ENCODE measurements at regions of chrX and their contacts with region 1.

Region 1: GRCh38 chrX:30735839-30736238 is 82.6 kb downstream of the GK start:
- DNase-seq: peak; percentile 34 to 73 (median 59)
- ATAC-seq: peak; percentile 78
- H3K4me3 ChIP-seq: no peak overlapping the region
- H3K4me3 Mint-ChIP-seq: peak overlapping the region in 4 of 10 donors; percentile 22 to 69 (median 37)
- H3K27ac ChIP-seq: no peak overlapping the region
- H3K27ac Mint-ChIP-seq: no peak overlapping the region
- H3K4me1 ChIP-seq: no peaks in the 10 kb centered on the region
- H3K4me1 Mint-ChIP-seq: peaks cover 0 to 5% (median 0%) of the 10 kb centered on the region in 7 donors
- H3K27me3 ChIP-seq: no peaks in the 10 kb centered on the region
- H3K27me3 Mint-ChIP-seq: no peaks in the 10 kb centered on the region

Region 2: DNA sequence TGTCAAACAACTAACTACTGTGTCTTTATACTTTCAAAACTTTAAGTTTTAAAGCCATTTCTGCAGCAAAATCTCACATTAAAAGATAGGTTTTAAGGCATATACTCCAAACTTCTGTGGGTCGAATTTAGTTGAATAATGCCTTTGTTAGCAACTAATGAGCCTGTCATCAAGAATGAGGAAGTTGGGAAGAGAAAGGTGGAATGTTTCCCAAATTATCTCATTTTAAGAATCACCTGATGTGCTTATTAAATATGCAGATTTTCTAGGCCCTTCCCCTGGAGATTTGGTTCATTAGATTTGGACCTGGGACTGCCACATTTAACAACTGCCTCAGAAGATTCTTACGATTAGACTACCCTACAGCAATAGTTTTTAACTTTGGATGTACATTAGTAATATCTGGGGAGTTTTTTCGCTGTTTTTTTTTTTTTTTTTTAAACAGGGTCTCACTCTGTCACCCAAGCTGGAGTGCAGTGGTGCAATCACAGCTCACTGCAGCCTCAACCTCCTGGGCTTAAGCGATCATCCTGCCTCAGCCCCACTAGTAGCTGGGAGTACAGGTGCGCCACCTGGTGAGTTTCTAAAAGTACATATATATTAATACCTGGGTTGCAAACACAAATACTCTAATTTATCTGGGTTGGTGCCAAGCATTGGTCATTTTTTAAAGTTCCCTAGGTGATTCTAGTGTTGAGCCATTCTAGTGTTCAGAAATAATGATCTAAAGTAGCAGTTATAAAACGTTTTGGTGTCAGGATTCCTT is 142.2 kb before region 1 on chrX:
- CTCF ChIA-PET with region 1: no interaction called
- POLR2A ChIA-PET with region 1: no interaction called
- intact Hi-C with region 1: no loop called
- DNase-seq: peak in 4 of 9 donors; percentile 24 to 39 (median 25)
- ATAC-seq: no peak
- H3K4me3 ChIP-seq: no peak overlapping the region
- H3K4me3 Mint-ChIP-seq: peak overlapping the region in 1 of 10 donors; percentile 1
- H3K27ac ChIP-seq: no peak overlapping the region
- H3K27ac Mint-ChIP-seq: no peak overlapping the region
- H3K4me1 ChIP-seq: no peaks in the 10 kb centered on the region
- H3K4me1 Mint-ChIP-seq: peaks cover 0 to 22% (median 4%) of the 10 kb centered on the region in 7 donors
- H3K27me3 ChIP-seq: no peaks in the 10 kb centered on the region
- H3K27me3 Mint-ChIP-seq: peaks cover 0 to 3% (median 0%) of the 10 kb centered on the region in 5 donors

Region 3: GRCh38 chrX:30822068-30822681 is 86.3 kb after region 1 on chrX:
- CTCF ChIA-PET with region 1: no interaction called
- POLR2A ChIA-PET with region 1: no interaction called
- intact Hi-C with region 1: loop called in 1 of 2 experiments (anchors 5 kb)
- DNase-seq: no peak
- ATAC-seq: peak; percentile 32
- H3K4me3 ChIP-seq: no peak overlapping the region
- H3K4me3 Mint-ChIP-seq: no peak overlapping the region
- H3K27ac ChIP-seq: no peak overlapping the region
- H3K27ac Mint-ChIP-seq: no peak overlapping the region
- H3K4me1 ChIP-seq: peaks cover 0 to 6% of the 10 kb centered on the region in 2 donors
- H3K4me1 Mint-ChIP-seq: peaks cover 5 to 28% (median 23%) of the 10 kb centered on the region in 7 donors
- H3K27me3 ChIP-seq: no peaks in the 10 kb centered on the region
- H3K27me3 Mint-ChIP-seq: no peaks in the 10 kb centered on the region

Region 4: GRCh38 chrX:30831082-30831481 is 95.2 kb after region 1 on chrX:
- CTCF ChIA-PET with region 1: no interaction called
- POLR2A ChIA-PET with region 1: no interaction called
- intact Hi-C with region 1: loop called in 1 of 2 experiments (anchors 5 kb)
- DNase-seq: peak in 8 of 9 donors; percentile 11 to 34 (median 22)
- ATAC-seq: peak; percentile 55
- H3K4me3 ChIP-seq: no peak overlapping the region
- H3K4me3 Mint-ChIP-seq: peak overlapping the region; percentile 72 to 86 (median 82)
- H3K27ac ChIP-seq: peak overlapping the region; percentile 64
- H3K27ac Mint-ChIP-seq: peak overlapping the region; percentile 84 to 95 (median 93)
- H3K4me1 ChIP-seq: no peaks in the 10 kb centered on the region
- H3K4me1 Mint-ChIP-seq: peaks cover 8 to 49% (median 38%) of the 10 kb centered on the region in 7 donors
- H3K27me3 ChIP-seq: no peaks in the 10 kb centered on the region
- H3K27me3 Mint-ChIP-seq: no peaks in the 10 kb centered on the region

Region 5: GRCh38 chrX:30865015-30865414 is 129.2 kb after region 1 on chrX:
- CTCF ChIA-PET with region 1: interaction called, 3 read pairs
- POLR2A ChIA-PET with region 1: no interaction called
- intact Hi-C with region 1: loop called in 1 of 2 experiments (anchors 1 kb)
- DNase-seq: peak in 3 of 9 donors; percentile 3 to 7 (median 4)
- ATAC-seq: no peak
- H3K4me3 ChIP-seq: no peak overlapping the region
- H3K4me3 Mint-ChIP-seq: no peak overlapping the region
- H3K27ac ChIP-seq: no peak overlapping the region
- H3K27ac Mint-ChIP-seq: no peak overlapping the region
- H3K4me1 ChIP-seq: no peaks in the 10 kb centered on the region
- H3K4me1 Mint-ChIP-seq: peaks cover 0 to 7% (median 0%) of the 10 kb centered on the region in 7 donors
- H3K27me3 ChIP-seq: no peaks in the 10 kb centered on the region
- H3K27me3 Mint-ChIP-seq: no peaks in the 10 kb centered on the region

Region 6: DNA sequence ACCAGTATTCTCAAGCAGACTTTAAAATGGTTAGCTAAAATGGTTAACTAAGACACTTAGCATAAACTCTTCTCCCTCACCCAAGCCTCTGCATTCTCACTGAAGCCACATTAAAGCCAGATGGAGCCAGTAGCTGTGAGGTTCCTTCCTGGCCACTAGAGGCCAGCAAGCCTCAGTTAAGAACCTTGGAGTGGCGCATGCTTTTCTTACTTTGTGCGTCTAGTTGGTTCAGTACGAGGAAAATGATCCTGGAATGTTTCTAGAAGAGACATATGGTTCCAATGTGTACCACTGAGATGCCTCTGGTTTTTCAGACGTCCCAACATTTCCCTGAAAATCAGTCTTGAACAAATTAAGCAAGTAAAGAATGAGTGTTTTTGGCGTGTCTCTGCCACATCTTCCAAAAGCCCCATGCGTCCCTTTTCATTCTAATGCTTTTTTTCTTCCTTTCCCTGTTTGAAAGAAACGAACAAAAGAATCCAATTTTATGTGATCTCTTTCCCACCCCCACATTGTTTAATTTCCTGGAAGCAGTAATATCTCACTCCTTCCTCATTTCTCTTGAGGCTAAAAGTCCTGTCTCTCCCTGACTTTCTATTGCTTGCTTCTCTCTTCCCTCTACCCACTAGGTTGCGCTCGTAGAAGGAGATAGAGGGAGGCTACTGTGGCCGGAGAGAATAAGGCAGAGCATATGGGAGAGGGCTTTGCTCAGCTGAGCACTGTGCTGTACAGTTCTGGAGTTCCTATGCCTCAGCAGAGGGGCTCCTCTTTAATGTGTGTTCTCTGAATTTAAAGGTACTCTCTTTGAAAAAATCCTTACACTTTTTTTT is 236.2 kb after region 1 on chrX:
- CTCF ChIA-PET with region 1: interaction called, 3 read pairs
- POLR2A ChIA-PET with region 1: no interaction called
- intact Hi-C with region 1: loop called (anchors 2 to 10 kb)
- DNase-seq: peak in 5 of 9 donors; percentile 12 to 22 (median 19)
- ATAC-seq: peak; percentile 76
- H3K4me3 ChIP-seq: peak overlapping the region; percentile 20
- H3K4me3 Mint-ChIP-seq: peak overlapping the region; percentile 51 to 92 (median 80)
- H3K27ac ChIP-seq: no peak overlapping the region
- H3K27ac Mint-ChIP-seq: peak overlapping the region in 1 of 9 donors; percentile 80
- H3K4me1 ChIP-seq: no peaks in the 10 kb centered on the region
- H3K4me1 Mint-ChIP-seq: peaks cover 0 to 16% (median 13%) of the 10 kb centered on the region in 7 donors
- H3K27me3 ChIP-seq: no peaks in the 10 kb centered on the region
- H3K27me3 Mint-ChIP-seq: peaks cover 0 to 8% (median 4%) of the 10 kb centered on the region in 5 donors

Measured in naive thymus-derived CD4-positive, alpha-beta T cell (primary cell).